PC-3 (cell line): ENCODE measurements at regions of chr21 and their contacts with region 1.

Region 1: DNA sequence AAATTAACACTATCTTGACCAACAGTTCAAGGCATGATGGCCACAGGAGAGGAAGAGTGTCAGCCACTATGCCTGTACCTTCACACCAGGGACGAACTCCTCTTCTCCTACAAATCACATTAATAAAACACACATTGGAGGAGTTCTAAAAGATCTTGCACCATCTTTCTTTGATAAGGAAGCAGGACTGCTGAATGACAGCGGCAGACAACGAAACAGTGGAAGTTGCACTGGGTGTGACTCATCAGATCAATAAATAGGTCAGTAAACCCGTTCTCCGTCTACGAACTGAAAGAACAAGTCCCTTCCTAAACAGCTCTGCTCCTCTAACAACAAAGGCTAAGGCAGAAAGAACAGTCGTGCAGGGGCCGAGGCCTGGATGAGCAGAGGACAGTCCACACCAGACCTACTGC is 23.1 kb downstream of the UBE2G2 start:
- DNase-seq: peak; percentile 53
- ATAC-seq: peak; percentile 65
- H3K4me3 ChIP-seq: no peak overlapping the region
- H3K27ac ChIP-seq: no peak overlapping the region
- H3K4me1 ChIP-seq: no peaks in the 10 kb centered on the region; the same call in 1 of the 2 replicates
- H3K27me3 ChIP-seq: no peaks in the 10 kb centered on the region
- CTCF ChIP-seq: no peak

Region 2: DNA sequence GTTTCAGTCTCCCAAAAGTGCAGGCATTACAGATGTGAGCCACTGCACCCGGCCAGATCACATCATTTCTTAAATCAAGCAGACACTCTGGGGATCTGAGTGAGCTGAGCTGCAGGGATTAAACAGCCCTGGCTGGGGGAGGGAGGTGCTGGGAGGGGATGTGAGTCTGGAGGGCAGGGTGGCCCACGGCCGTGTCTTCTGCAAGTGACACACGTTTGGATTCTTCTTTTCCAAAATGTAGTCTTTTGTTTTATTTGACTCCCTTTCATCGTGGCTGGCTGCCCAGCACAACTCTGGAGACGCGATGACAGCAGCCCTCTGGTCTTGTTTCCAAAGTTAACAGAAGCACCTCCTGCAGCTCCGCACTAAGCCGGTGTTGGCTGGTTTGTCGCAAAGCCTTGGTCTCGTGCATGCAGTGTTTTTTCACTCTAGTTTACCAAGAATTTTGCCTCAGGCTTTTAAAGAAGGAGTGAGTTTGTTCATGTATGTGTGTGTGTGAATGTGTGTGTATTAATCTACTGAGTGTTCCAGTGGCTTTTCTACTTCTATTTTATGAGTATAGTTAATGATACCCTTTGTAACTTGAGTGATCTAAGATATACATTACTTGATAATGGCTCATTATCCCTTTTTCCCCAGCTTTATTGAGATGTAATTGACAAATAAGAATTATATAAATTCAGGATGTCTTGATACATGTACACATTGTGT is 195.3 kb before region 1 on chr21:
- CTCF ChIA-PET with region 1: interaction called, 12 read pairs
- POLR2A ChIA-PET with region 1: no interaction called
- intact Hi-C with region 1: no loop called
- DNase-seq: peak; percentile 12
- ATAC-seq: no peak
- H3K4me3 ChIP-seq: no peak overlapping the region
- H3K27ac ChIP-seq: no peak overlapping the region
- H3K4me1 ChIP-seq: peaks cover 10% of the 10 kb centered on the region; the same call in 1 of the 2 replicates
- H3K27me3 ChIP-seq: no peaks in the 10 kb centered on the region
- CTCF ChIP-seq: no peak

Region 3: DNA sequence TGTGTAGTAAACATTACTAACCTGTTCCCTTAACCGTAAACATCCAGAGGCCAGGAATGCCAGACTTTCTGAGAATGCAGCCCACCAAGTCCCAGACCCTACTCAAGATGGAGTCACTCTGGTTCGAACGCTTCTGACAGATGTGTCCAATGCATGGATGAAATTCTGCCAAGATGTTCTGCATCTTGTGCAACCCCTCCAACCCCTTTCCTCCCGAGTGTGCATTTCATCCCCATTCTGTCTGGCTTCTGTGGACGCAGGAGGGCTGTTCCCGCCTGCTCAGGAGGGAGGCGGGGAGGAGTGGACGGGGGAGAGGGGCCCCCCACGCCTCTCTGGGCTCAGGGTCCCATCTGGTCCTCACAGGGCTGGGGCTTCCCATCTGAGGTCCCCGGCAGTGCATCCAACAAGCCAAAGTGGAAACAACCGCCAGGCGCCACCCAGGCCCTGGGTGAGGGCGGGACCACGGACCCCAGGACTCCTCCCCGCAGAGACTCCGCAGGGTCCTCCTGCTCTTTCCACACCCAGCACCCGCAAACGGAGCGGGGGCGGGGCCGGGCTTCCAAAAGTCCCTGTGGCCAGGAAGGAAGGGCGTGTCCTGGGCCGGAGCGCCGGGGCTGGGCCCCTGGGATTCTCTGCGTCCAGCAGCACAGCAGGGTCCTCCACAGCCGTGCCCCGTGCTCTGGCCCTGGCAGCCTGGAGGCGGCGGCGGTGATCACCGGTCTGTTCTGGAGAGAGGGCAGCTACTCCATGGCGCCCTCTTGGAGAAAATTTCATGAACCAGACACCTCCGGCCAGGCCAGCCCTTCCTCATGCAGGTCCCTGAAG is 67.1 kb after region 1 on chr21:
- CTCF ChIA-PET with region 1: no interaction called
- POLR2A ChIA-PET with region 1: no interaction called
- intact Hi-C with region 1: no loop called
- DNase-seq: peak; percentile 66
- ATAC-seq: peak; percentile 74
- H3K4me3 ChIP-seq: peak overlapping the region; percentile 36
- H3K27ac ChIP-seq: no peak overlapping the region
- H3K4me1 ChIP-seq: peaks cover 11% of the 10 kb centered on the region
- H3K27me3 ChIP-seq: no peaks in the 10 kb centered on the region
- CTCF ChIP-seq: peak; percentile 68

Region 4: DNA sequence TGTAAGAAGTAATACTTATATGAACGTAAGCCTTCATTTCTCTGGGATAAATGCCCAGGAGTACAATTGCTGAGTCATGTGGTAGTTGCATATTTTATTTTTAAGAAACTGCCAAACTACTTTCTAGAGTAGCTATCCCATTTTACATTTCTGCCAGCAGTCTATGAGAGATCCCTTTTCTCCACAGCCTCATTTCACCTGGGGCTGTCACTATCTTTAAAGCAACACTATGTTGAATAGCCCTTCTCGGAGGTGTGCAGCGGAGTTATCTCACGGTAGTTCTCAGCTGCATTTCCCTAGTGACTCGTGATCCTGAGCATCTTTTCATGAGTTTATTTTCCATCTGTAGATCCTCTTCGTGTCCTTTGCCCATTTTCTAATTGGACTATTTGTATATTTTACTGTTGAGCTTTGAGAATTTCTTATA is 389.3 kb after region 1 on chr21:
- CTCF ChIA-PET with region 1: no interaction called
- POLR2A ChIA-PET with region 1: no interaction called
- intact Hi-C with region 1: no loop called
- DNase-seq: peak; percentile 16
- ATAC-seq: peak; percentile 40
- H3K4me3 ChIP-seq: no peak overlapping the region
- H3K27ac ChIP-seq: no peak overlapping the region
- H3K4me1 ChIP-seq: peaks cover 4% of the 10 kb centered on the region
- H3K27me3 ChIP-seq: no peaks in the 10 kb centered on the region
- CTCF ChIP-seq: no peak